Body of pancreas (tissue), 4 donors: ENCODE measurements at regions of chr3 and their contacts with region 1.

Region 1: DNA sequence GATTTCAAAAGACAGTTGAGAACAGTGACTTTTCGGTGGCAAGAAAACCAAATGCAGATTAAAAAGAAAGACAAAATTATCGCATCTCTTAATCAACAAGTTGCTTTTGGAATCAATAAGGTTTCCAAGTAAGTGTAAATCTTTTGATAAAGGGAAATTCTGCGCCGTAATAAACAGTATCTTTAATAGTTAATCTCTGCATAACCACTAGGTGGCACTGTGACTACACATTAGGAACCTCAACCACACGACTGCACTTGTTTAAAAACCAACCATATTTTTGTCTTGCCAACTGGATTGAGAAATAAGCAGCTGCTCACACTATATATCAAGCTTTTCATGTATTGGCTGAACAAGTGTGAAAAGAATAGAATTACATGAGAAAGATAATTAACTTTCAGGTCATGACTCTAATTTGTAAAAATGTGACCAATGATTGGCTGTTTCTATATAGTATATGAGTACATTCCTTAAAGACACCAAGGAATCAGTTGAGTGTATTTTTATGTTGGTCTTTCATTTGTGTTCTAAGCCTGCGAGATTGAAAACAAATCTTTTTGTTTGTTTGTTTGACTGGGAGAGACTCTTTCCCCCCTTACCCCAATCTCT is 72.7 kb downstream of the DZIP3 start:
- DNase-seq: peak; percentile 5 to 56 (median 22)
- ATAC-seq: peak; percentile 92
- H3K4me3 ChIP-seq: no peak overlapping the region
- H3K27ac ChIP-seq: no peak overlapping the region
- H3K4me1 ChIP-seq: peaks cover 8% of the 10 kb centered on the region
- H3K27me3 ChIP-seq: no peaks in the 10 kb centered on the region
- CTCF ChIP-seq: peak; percentile 68 to 90 (median 80)
- POLR2A ChIP-seq: no peak

Region 2: DNA sequence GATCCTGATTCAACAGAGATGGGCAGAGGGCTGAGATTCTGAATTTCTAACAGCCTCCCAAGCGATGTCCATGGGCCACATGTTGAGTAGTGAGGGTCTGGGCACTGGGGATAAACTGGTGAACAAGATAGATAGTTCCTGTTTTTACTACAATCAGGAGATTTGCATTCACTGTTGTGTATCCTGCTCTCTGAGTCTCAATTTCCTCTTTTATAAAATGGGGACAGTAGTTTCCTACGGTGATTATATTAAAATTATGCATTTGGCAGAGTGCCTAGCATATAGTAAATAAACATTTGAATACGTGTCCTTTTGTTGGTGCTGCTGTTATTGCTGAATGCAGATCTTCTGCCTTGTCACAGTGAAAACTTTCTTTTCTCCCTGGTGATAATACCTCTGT is 254.3 kb before region 1 on chr3:
- intact Hi-C with region 1: no loop called
- DNase-seq: no peak
- ATAC-seq: no peak
- H3K4me3 ChIP-seq: no peak overlapping the region
- H3K27ac ChIP-seq: no peak overlapping the region
- H3K4me1 ChIP-seq: peaks cover 31% of the 10 kb centered on the region
- H3K27me3 ChIP-seq: no peaks in the 10 kb centered on the region
- CTCF ChIP-seq: no peak
- POLR2A ChIP-seq: no peak

Region 3: GRCh38 chr3:108879916-108880315 is 217.7 kb after region 1 on chr3:
- intact Hi-C with region 1: no loop called
- DNase-seq: no peak
- ATAC-seq: no peak
- H3K4me3 ChIP-seq: no peak overlapping the region
- H3K27ac ChIP-seq: no peak overlapping the region
- H3K4me1 ChIP-seq: no peaks in the 10 kb centered on the region
- H3K27me3 ChIP-seq: no peaks in the 10 kb centered on the region
- CTCF ChIP-seq: no peak
- POLR2A ChIP-seq: no peak

Region 4: DNA sequence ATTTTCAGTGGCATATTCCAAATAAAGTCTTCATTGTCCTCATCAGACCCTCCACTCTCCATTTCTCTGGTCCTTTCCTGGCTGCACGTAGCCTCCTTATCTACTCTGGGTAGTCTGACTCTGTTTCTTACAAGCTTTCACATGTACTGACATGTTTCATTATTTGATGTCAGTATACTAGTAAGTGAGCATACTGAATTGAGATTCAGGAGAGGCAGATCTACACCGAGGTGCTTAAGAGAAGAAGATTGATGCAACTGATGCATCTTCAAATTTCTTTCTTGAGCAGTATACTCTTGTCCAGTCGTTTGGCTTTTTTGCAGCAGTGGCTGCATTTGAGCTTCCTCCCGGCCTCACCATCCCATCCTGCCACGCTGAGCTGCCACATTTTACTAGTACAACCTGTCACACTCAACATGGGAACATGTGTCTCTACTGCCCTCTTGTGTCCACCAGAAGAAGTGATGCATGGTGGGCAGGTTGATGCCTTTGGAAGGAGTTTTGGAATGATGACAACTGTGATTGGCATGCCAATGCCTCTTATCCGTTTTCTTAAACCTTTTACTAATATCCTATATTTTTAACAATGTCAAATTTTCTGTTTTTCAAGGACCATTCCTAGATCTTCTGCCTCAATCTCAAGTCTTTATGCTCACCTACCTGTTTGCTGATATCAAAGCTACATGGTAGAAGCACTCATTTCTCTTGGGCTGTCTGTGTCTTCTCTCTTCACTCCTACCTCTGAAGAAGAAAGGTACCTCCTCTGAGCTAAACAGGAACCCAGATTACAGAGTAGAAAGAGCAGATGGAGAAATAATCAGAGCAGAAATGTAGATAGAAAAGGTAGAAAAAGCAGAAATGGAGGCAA is 252.8 kb after region 1 on chr3:
- intact Hi-C with region 1: loop called (anchors 10 kb)
- DNase-seq: peak; percentile 57 to 74 (median 66)
- ATAC-seq: peak; percentile 87
- H3K4me3 ChIP-seq: no peak overlapping the region
- H3K27ac ChIP-seq: no peak overlapping the region
- H3K4me1 ChIP-seq: no peaks in the 10 kb centered on the region
- H3K27me3 ChIP-seq: no peaks in the 10 kb centered on the region
- CTCF ChIP-seq: peak; percentile 32 to 84 (median 78)
- POLR2A ChIP-seq: no peak

Region 5: DNA sequence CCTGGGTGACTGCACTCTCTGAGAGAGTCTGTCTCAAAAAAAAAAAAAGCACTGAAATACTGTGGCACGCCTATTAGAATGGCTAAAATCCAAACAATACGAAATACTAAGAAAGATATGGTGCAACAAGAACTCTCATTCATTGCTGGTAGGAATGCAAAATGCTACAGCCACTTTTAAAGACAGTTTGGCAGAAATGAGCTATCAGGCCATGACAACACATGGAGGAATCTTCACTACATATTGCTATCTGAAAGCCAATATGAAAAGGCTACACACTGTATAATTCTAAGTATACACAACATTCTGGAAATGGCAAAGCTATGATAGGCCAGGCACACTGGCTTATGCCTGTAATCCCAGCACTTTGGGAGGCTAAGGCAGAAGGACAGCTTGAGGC is 635.3 kb after region 1 on chr3:
- intact Hi-C with region 1: no loop called
- DNase-seq: no peak
- ATAC-seq: no peak
- H3K4me3 ChIP-seq: no peak overlapping the region
- H3K27ac ChIP-seq: no peak overlapping the region
- H3K4me1 ChIP-seq: no peaks in the 10 kb centered on the region
- H3K27me3 ChIP-seq: no peaks in the 10 kb centered on the region
- CTCF ChIP-seq: no peak
- POLR2A ChIP-seq: no peak